ENCODE measurements at regions of chr10 and their contacts with region 1.

Region 1: DNA sequence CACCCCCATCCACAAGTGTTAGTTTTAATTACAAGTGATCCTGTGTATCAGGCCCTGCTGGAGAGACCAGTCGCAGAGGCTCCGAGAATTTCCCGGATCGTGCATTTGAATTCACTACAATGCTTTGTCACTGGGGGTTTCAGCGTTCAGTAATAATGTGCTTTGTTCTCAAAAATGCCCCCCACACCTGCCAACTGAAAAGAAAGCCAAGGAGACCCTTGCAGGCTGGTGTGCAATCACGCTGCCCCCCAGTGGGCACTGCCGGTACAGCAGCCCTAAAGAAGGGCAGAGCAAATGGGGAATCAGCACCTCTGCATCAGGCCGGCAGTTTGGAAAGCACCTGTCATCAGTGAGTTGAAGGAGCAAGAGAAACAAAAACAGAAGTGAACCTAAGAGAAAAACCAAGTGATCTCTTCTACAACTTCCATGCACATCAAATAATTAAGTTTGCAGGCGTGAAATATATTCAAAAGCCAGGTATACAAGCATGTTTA is 177.6 kb downstream of the PARD3 start:
- DNase-seq: peak; percentile 71
- ATAC-seq: peak; percentile 63

Region 2: GRCh38 chr10:33115738-33116719 is 1521.4 kb before region 1 on chr10:
- intact Hi-C with region 1: loop called (anchors 10 kb)
- DNase-seq: no peak
- ATAC-seq: peak; percentile 40

Region 3: GRCh38 chr10:33193057-33193700 is 1444.3 kb before region 1 on chr10:
- intact Hi-C with region 1: loop called (anchors 2 kb)
- DNase-seq: peak; percentile 79
- ATAC-seq: peak; percentile 92

Region 4: DNA sequence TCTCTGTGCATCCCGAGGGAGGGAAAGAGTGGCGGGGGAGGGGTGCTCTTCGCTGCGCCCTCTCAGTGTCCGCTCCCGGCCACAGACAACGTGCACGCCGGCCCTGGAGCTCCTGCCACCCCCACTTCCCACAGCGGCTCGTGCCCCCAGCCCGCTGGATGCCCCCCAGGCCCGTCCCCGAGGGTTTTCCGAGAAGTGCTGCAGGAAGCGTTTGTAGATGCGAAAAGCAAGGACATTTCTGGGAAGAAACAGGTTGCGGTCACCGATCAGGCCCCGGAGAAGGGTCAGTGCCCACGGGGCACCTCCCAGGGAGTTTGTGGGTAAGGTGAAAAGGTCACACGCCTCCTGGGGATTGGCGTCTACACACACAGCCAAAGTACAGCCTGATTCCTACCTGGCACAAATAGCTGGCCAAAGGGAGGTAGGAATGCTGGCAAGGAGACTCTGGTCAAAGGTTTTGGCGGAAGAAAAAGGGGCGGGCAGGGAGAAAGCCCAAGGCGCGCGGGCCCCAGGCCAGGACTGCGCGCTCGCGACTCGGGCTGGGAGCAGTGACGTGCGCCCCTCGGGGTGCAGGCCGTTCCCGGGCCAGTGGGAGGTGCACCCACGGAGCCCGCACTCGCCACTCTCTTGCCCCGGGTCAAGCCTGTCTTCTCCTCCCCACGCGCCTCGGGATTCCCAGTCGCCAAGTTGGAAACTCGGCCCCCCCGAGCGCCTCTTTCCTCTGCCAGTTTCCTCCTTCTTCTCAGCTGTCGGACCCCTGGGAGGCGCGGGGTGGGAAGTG is 1301.5 kb before region 1 on chr10:
- intact Hi-C with region 1: loop called (anchors 2 kb)
- DNase-seq: peak; percentile 85
- ATAC-seq: peak; percentile 66

Region 5: DNA sequence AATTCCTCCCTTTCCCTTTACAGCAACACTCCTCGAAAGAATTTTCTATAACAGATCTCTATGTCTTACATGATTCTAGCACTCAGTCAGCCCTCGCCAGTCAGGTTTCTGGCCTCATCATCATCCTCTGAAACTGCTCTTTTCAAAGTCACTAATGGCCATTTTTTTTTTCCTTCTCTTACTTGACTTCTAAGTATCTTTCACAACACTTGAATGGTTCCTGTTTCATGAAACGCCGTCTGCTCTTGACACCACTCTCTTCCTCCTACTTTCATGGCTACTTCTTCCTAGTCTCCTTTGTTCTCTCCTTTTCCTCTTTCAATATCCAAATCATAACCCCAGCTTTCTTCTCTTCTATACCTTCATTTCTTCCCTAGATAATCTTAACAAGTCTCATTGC is 1202.5 kb before region 1 on chr10:
- intact Hi-C with region 1: loop called (anchors 10 kb)
- DNase-seq: no peak
- ATAC-seq: no peak

Region 6: GRCh38 chr10:34462056-34462455 is 175.4 kb before region 1 on chr10:
- intact Hi-C with region 1: no loop called
- DNase-seq: no peak
- ATAC-seq: no peak

Region 7: GRCh38 chr10:34522546-34522945 is 114.9 kb before region 1 on chr10:
- intact Hi-C with region 1: loop called (anchors 2 kb)
- DNase-seq: no peak
- ATAC-seq: no peak

Measured in Right ventricle myocardium inferior (tissue), 1 donor.